CD4-positive, alpha-beta T cell (primary cell): ENCODE measurements at regions of chr12 and their contacts with region 1.

Region 1: GRCh38 chr12:45170456-45171042 is 45.3 kb upstream of the ANO6 start:
- DNase-seq: peak; percentile 60 to 87 (median 78)
- ATAC-seq: peak; percentile 66
- H3K4me3 ChIP-seq: no peak overlapping the region
- H3K4me3 Mint-ChIP-seq: no peak overlapping the region
- H3K27ac ChIP-seq: no peak overlapping the region
- H3K27ac Mint-ChIP-seq: no peak overlapping the region
- H3K4me1 ChIP-seq: no peaks in the 10 kb centered on the region
- H3K4me1 Mint-ChIP-seq: no peaks in the 10 kb centered on the region
- H3K27me3 ChIP-seq: no peaks in the 10 kb centered on the region
- H3K27me3 Mint-ChIP-seq: no peaks in the 10 kb centered on the region
- CTCF ChIP-seq: peak; percentile 93

Region 2: DNA sequence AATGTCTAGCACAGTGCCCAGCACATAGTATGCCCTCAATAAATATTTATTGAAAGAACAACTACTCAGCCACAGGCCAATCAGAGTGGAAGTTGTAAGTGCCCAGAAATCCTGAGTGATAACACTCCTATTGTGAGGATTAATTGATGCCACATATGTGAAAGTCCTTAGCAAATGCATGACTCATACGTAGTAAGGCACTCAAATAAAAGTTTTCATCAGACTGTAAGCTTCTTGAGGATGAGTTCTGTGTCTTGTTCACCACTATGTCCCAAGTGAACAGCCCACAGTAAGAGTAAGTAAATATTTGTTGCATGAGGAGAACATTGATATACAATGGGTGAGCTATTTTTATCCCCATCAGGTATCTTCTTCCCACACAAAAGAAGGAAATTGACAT is 20.7 kb after region 1 on chr12:
- CTCF ChIA-PET with region 1: no interaction called
- POLR2A ChIA-PET with region 1: no interaction called
- intact Hi-C with region 1: no loop called
- DNase-seq: no peak
- ATAC-seq: no peak
- H3K4me3 ChIP-seq: no peak overlapping the region
- H3K4me3 Mint-ChIP-seq: no peak overlapping the region
- H3K27ac ChIP-seq: no peak overlapping the region
- H3K27ac Mint-ChIP-seq: no peak overlapping the region
- H3K4me1 ChIP-seq: no peaks in the 10 kb centered on the region
- H3K4me1 Mint-ChIP-seq: peaks cover 10% of the 10 kb centered on the region
- H3K27me3 ChIP-seq: no peaks in the 10 kb centered on the region
- H3K27me3 Mint-ChIP-seq: no peaks in the 10 kb centered on the region
- CTCF ChIP-seq: no peak

Region 3: GRCh38 chr12:45257185-45257930 is 86.8 kb after region 1 on chr12:
- CTCF ChIA-PET with region 1: no interaction called
- POLR2A ChIA-PET with region 1: no interaction called
- intact Hi-C with region 1: no loop called
- DNase-seq: peak in 1 of 14 experiments; percentile 6
- ATAC-seq: no peak
- H3K4me3 ChIP-seq: no peak overlapping the region
- H3K4me3 Mint-ChIP-seq: no peak overlapping the region
- H3K27ac ChIP-seq: no peak overlapping the region
- H3K27ac Mint-ChIP-seq: no peak overlapping the region
- H3K4me1 ChIP-seq: peaks cover 9% of the 10 kb centered on the region
- H3K4me1 Mint-ChIP-seq: peaks cover 49% of the 10 kb centered on the region
- H3K27me3 ChIP-seq: no peaks in the 10 kb centered on the region
- H3K27me3 Mint-ChIP-seq: no peaks in the 10 kb centered on the region
- CTCF ChIP-seq: no peak

Region 4: DNA sequence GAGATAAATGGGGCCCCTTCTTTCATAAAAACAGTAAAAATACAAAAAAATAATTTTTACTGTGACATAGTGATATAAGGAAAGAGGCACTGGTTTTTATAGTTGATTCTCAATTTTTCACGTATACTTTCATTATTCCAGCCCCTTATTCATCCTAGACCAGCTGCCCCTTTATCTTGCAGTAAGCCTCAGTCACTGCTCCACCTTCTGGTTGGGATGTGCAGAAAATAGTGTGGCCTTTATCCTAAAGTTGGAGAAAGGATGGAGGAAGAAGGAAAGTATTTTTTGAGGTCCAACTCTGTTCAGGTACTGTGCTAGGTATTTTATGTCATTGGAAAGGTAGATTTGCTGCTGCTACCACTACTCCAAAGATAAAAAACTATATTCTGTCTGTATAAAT is 218.0 kb after region 1 on chr12:
- CTCF ChIA-PET with region 1: interaction called, 3 read pairs
- POLR2A ChIA-PET with region 1: no interaction called
- intact Hi-C with region 1: loop called (anchors 1 to 2 kb)
- DNase-seq: peak in 4 of 14 experiments; percentile 17 to 27 (median 21)
- ATAC-seq: no peak
- H3K4me3 ChIP-seq: no peak overlapping the region
- H3K4me3 Mint-ChIP-seq: no peak overlapping the region
- H3K27ac ChIP-seq: no peak overlapping the region
- H3K27ac Mint-ChIP-seq: no peak overlapping the region
- H3K4me1 ChIP-seq: no peaks in the 10 kb centered on the region
- H3K4me1 Mint-ChIP-seq: no peaks in the 10 kb centered on the region
- H3K27me3 ChIP-seq: no peaks in the 10 kb centered on the region
- H3K27me3 Mint-ChIP-seq: no peaks in the 10 kb centered on the region
- CTCF ChIP-seq: peak; percentile 16